ENCODE measurements at regions of chr19 and their contacts with region 1.

Region 1: DNA sequence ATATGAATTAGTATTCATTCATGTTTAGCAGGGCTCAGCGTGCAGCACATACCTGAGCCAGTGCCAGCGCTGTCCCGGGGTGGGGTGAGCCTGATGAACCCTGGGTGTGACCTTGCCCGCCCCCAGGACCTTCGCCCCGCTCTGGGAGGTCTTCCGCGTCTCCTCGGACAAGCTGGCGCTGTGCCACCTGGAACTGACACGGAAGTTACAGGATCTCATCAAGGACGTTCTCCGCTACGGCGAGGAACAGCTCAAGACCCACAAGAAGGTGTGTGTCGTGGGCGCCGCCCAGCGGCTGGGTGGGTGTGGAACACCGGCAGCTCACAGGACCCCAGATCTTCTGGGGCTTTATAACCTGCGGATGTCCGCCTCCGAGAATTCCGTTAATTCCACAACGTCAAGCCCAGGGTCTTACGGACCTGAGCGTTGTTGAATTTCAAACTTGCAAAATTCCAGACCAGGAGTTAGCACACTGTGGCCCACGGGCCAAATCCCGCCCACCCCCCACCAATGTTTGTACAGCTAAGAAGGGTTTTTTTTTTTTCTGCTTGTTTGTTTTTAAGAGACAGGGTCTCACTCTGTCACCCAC is 15.4 kb downstream of the FCHO1 start:
- DNase-seq: no peak
- H3K4me3 ChIP-seq: peak overlapping the region; percentile 25
- CTCF ChIP-seq: peak; percentile 85

Region 2: DNA sequence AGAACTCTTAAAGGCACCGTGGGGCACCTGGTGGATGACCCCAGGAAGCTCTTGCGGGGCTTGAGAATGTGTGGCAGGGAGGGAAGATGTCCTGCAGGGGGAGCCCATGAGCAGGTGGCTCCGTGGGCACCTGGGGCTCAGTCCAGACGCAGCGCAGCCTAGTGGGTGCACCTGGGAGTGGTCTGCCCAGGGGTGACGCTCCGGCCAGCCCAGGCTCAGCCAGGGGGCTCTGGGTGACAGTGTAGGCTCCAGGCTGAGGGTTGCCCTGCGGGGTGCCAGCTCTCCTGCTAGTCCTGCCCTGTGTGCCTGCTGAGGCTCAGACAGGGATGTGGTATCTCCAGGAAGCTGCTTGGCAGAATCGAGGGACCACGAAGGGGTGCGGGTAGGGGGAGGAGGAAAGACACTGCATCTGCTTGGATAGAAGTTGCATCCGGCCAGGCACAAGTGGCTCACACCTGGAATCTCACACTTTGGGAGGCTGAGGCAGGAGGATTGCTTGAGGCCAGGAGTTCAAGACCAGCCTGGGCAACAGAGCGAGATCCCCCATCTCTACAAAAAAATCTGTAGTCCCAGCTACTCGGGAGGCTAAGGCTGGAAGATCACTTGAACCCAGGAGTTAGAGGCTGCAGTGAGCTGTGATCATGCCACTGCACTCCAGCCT is 270.2 kb before region 1 on chr19:
- CTCF ChIA-PET with region 1: interaction called, 14 read pairs
- POLR2A ChIA-PET with region 1: no interaction called
- DNase-seq: no peak
- H3K4me3 ChIP-seq: no peak overlapping the region
- CTCF ChIP-seq: peak; percentile 91

Region 3: DNA sequence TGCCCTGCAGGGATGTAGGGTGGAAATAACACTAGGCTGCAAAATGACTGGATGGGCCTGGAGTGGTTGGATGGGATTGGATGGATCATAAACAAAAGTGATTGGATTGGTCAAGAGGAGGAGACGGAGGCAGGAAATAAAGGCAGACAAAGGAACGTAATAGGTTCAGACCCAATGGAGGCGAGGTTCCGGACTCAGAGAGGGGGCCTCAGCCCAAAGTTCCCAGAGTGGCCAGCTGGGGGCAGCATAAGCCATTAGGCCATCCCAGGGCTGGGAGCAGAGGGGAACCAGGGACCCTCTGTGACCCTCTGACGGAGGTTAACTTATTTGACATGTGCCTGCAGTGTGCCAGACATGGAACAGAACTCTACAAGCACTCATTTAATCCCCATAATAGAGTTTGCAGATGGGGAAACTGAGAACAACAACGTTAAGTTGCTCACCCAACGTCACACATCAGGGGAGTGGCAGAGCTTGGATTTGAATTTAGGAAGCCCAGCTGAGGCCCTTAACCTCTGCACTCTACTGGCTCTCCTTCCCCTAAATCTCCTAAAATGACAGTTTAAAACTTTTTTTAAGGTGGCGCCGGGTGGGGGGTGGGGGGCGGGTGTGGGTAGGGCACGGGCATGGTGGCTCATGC is 62.7 kb before region 1 on chr19:
- CTCF ChIA-PET with region 1: interaction called, 17 read pairs
- POLR2A ChIA-PET with region 1: no interaction called
- DNase-seq: no peak
- H3K4me3 ChIP-seq: no peak overlapping the region
- CTCF ChIP-seq: peak; percentile 61

Region 4: DNA sequence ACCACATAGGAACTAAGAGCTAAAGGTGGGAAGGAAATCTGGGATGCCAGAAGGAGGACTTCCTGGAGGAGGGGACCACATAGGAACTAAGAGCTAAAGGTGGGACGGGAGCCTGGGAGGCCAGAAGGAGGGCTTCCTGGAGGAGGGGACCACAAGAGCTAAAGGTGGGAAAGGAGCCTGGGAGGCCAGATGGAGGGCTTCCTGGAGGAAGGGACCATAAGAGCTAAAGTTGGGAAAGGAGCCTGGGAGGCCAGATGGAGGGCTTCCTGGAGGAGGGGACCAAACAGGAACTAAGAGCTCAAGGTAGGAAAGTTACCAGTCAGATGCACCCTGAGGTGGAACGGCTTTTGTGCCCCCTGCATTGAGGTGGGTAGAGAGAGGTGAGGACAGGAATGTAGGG is 25.2 kb before region 1 on chr19:
- CTCF ChIA-PET with region 1: interaction called, 11 read pairs
- POLR2A ChIA-PET with region 1: no interaction called
- DNase-seq: no peak
- H3K4me3 ChIP-seq: no peak overlapping the region
- CTCF ChIP-seq: no peak

Region 5: DNA sequence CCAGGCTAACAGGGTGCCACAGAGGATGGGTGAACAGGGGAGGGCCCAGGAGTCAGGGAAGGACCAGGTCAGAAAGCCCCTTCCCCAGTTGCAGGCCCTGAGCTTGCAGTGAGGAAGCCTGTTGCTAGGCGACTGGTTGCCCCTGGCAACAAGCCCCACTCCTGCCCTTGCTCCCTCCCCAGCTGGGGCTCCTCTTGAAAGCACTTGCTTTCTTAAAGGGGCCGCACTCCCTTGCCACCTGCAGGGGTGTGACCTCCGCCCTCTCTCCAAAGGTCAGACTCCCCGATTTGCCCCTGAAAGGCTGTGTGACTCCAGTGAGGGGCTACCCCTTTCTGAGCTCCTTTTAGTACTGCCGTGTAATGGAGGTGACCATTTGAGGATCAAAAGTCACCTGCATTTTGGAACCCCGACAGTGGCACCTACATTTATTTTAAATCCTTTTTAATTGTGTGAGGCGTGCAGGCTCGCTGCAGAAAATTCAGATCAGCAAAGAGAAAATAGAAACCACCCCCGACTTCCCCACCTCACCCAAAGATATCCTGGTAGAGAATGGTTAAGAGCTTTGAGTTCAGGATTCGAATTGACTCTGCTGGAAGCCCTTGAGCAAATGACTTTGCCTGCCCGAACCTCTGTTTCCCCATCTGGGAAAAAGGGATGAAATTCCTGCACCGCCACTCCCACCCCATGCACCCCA is 10.5 kb before region 1 on chr19:
- CTCF ChIA-PET with region 1: interaction called, 18 read pairs
- POLR2A ChIA-PET with region 1: no interaction called
- DNase-seq: no peak
- H3K4me3 ChIP-seq: no peak overlapping the region
- CTCF ChIP-seq: no peak

Region 6: GRCh38 chr19:17780781-17781180 is 14.1 kb after region 1 on chr19:
- CTCF ChIA-PET with region 1: interaction called, 16 read pairs
- POLR2A ChIA-PET with region 1: no interaction called
- DNase-seq: no peak
- H3K4me3 ChIP-seq: no peak overlapping the region
- CTCF ChIP-seq: no peak

Region 7: GRCh38 chr19:17915951-17916593 is 149.4 kb after region 1 on chr19:
- CTCF ChIA-PET with region 1: no interaction called
- POLR2A ChIA-PET with region 1: no interaction called
- DNase-seq: no peak
- H3K4me3 ChIP-seq: no peak overlapping the region
- CTCF ChIP-seq: no peak